T-cell (primary cell): ENCODE measurements at regions of chr2 and their contacts with region 1.

Region 1: GRCh38 chr2:7363906-7364305 is 446.7 kb downstream of the RNF144A start:
- DNase-seq: no peak
- ATAC-seq: no peak
- H3K4me3 ChIP-seq: no peak overlapping the region
- H3K4me3 Mint-ChIP-seq: no peak overlapping the region
- H3K27ac ChIP-seq: no peak overlapping the region
- H3K27ac Mint-ChIP-seq: no peak overlapping the region
- H3K4me1 ChIP-seq: no peaks in the 10 kb centered on the region
- H3K4me1 Mint-ChIP-seq: no peaks in the 10 kb centered on the region
- H3K27me3 ChIP-seq: no peaks in the 10 kb centered on the region
- H3K27me3 Mint-ChIP-seq: peaks cover 0 to 4% of the 10 kb centered on the region in 2 donors

Region 2: DNA sequence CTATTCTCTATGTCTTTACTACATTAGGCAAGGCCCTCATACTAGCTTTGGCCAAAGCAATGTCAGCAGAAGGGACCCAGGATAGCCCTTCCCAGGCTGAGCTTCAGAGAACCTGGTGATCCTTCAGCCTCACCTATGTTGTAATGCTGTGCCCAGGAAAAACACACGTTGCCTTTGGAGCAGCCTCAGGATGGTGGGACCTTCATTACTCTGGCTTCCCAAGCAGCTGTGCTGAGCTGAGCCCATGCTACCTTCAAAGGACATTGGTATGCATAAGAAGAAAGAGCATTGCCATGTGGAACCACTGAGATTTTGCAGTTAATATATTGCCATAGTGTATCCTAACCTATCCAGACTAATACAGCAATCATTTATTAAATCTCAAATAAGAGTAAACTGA is 561.6 kb after region 1 on chr2:
- CTCF ChIA-PET with region 1: no interaction called
- POLR2A ChIA-PET with region 1: interaction called in 1 of 2 experiments, 10 read pairs
- DNase-seq: no peak
- ATAC-seq: no peak
- H3K4me3 ChIP-seq: no peak overlapping the region
- H3K4me3 Mint-ChIP-seq: no peak overlapping the region
- H3K27ac ChIP-seq: no peak overlapping the region
- H3K27ac Mint-ChIP-seq: no peak overlapping the region
- H3K4me1 ChIP-seq: no peaks in the 10 kb centered on the region
- H3K4me1 Mint-ChIP-seq: no peaks in the 10 kb centered on the region
- H3K27me3 ChIP-seq: no peaks in the 10 kb centered on the region
- H3K27me3 Mint-ChIP-seq: no peaks in the 10 kb centered on the region